Activated naive CD4-positive, alpha-beta T cell treated with anti-CD3 and anti-CD28 coated beads for 36 hours (primary cell): ENCODE measurements at regions of chr22 and their contacts with region 1.

Region 1: GRCh38 chr22:50525390-50526068 is at the start of gene SCO2:
- DNase-seq: peak; percentile 98
- H3K4me3 Mint-ChIP-seq: peak within 1 kb of the TSS; percentile 97
- H3K27ac Mint-ChIP-seq: peak within 1 kb of the TSS; percentile 93
- H3K4me1 Mint-ChIP-seq: peaks cover 35% of the 10 kb centered on the region
- H3K27me3 Mint-ChIP-seq: no peaks in the 10 kb centered on the region
- total RNA-seq, gene SCO2: 1.1 to 2.1 TPM

Region 2: GRCh38 chr22:49960159-49961004 is 565.1 kb before region 1 on chr22 and contains the start of gene PIM3:
- CTCF ChIA-PET with region 1: no interaction called
- intact Hi-C with region 1: loop called (anchors 1 kb)
- DNase-seq: peak; percentile 94
- H3K4me3 Mint-ChIP-seq: peak within 1 kb of the TSS; percentile 91
- H3K27ac Mint-ChIP-seq: peak within 1 kb of the TSS; percentile 94
- H3K4me1 Mint-ChIP-seq: peaks cover 23% of the 10 kb centered on the region
- H3K27me3 Mint-ChIP-seq: no peaks in the 10 kb centered on the region
- total RNA-seq, gene PIM3: 202 to 210 TPM

Region 3: DNA sequence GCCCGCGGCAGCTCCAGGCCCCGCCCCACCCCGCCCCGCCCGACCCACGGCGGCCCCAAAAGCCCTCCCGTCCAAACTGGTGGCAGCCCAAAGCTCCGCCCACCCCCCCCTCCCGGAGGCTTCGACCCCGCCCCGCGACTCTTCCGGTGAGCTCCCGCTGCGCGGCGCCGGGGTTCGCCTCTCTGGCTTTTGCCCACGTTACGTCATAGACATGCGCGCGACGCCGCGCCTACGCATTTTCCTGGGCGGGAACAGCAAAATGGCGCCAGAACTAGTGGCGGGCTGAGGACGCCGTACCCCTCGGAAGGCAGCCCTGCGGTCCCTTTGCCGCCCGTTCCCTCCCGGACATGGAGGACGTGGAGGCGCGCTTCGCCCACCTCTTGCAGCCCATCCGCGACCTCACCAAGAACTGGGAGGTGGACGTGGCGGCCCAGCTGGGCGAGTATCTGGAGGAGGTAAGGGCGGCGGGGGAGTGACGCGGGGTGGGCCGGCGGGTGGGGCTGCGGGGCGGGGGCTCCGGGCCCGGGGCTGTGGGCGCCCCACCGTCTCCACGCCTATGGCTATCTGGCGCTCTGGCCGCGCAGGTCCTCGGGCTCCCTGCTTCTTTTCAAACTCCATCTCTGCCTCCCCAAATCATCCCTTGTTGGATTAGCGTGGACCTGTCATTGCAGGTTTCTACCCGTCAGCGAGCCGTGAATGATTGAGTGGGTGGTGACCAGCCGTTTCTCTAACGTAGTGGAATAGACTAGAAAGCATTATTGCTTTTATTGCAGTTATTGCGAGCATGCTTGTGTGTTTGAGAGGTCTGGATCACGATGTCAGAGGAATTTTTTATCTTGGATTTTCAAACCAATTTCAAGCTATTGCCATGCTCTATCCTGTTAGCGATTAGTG is 17.3 kb before region 1 on chr22 and contains the start of gene NCAPH2:
- CTCF ChIA-PET with region 1: interaction called, 22 read pairs
- intact Hi-C with region 1: loop called (anchors 1 kb)
- DNase-seq: peak; percentile 98
- H3K4me3 Mint-ChIP-seq: peak within 1 kb of the TSS; percentile 96
- H3K27ac Mint-ChIP-seq: peak within 1 kb of the TSS; percentile 96
- H3K4me1 Mint-ChIP-seq: peaks cover 30% of the 10 kb centered on the region
- H3K27me3 Mint-ChIP-seq: no peaks in the 10 kb centered on the region
- total RNA-seq, gene NCAPH2: 104 to 115 TPM

Region 4: GRCh38 chr22:50544078-50544745 is 18.7 kb after region 1 on chr22:
- CTCF ChIA-PET with region 1: interaction called, 39 read pairs
- intact Hi-C with region 1: loop called (anchors 2 kb)
- DNase-seq: peak; percentile 92
- H3K4me3 Mint-ChIP-seq: peak overlapping the region; percentile 62
- H3K27ac Mint-ChIP-seq: peak overlapping the region; percentile 72
- H3K4me1 Mint-ChIP-seq: peaks cover 60% of the 10 kb centered on the region
- H3K27me3 Mint-ChIP-seq: no peaks in the 10 kb centered on the region

Region 5: DNA sequence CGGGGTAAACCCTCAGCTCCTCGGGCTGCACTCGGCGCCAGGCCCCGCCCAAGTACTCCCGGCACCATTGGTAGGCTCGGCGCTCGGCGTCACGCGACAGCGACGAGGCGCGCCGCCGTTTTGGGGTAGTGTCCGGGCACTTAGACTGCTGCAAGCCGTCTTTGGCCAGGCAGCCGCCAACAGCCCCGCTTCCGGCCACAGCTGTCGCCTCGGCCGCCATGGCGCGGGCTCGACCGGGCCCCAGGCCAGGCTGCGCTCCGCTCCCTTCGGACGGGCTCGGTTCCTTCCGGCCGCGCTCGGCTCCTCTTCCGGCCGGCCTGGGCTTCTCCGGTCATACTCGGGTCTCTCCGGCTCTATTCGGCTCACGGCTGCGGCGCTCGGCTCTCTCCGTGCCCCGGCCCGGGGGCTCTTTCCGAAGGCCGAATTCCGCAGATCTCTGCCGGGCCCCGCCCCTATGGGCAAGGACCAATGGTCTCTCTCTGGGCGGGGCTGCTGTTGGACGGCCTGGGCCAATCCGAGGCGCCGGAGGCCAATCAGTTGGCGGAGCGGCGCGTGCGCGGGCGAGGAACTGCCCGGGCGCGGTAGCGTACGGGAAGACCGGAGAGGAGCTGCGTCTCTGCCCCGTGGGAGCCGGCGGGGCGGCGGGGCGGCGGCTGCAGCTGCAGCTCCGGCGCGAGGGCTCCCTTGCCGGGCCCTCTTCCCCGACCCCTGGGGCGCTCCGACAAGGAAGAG is 57.2 kb after region 1 on chr22 and contains the start of gene CHKB:
- CTCF ChIA-PET with region 1: interaction called, 9 read pairs
- intact Hi-C with region 1: loop called (anchors 2 kb)
- DNase-seq: peak; percentile 99
- H3K4me3 Mint-ChIP-seq: peak within 1 kb of the TSS; percentile 91
- H3K27ac Mint-ChIP-seq: peak within 1 kb of the TSS; percentile 82
- H3K4me1 Mint-ChIP-seq: peaks cover 31% of the 10 kb centered on the region
- H3K27me3 Mint-ChIP-seq: no peaks in the 10 kb centered on the region
- total RNA-seq, gene CHKB: 71.0 to 81.4 TPM